Activated T-helper 1 cell treated with anti-CD3 and anti-CD28 coated beads, Interleukin-12 subunit alpha, Interleukin-12 subunit beta, Interleukin-2, Interleukin-4 antibody, amounts not matched to agents 30 ng/mL and 10 ng/mL and 1 ng/mL, durations not matched to agents 14 hours and 24 hours and 36 hours (primary cell): ENCODE measurements at regions of chr20 and their contacts with region 1.

Region 1: DNA sequence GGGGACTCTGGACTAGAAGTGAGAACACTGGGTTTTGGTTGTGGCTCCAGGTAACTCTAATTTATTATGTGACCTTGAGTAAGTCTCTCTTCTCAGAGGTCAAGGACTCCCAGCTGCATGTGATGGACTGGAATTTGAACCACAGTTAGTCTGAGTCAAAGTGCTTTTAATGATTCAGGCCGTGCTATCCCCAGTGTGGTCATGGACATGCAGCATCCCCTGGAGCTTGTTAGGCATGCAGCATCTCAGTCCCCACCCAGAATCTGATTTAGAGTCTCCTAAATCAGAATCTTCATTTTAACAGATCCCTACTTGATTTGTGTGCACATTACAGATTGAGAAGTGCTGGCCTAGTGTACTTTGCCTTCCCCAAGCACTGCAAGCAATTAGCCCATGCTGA is 74.2 kb downstream of the TOX2 start:
- DNase-seq: no peak
- H3K4me3 Mint-ChIP-seq: no peak overlapping the region
- H3K27ac Mint-ChIP-seq: no peak overlapping the region
- H3K4me1 Mint-ChIP-seq: peaks cover 26% of the 10 kb centered on the region
- H3K27me3 Mint-ChIP-seq: peaks cover 3% of the 10 kb centered on the region

Region 2: DNA sequence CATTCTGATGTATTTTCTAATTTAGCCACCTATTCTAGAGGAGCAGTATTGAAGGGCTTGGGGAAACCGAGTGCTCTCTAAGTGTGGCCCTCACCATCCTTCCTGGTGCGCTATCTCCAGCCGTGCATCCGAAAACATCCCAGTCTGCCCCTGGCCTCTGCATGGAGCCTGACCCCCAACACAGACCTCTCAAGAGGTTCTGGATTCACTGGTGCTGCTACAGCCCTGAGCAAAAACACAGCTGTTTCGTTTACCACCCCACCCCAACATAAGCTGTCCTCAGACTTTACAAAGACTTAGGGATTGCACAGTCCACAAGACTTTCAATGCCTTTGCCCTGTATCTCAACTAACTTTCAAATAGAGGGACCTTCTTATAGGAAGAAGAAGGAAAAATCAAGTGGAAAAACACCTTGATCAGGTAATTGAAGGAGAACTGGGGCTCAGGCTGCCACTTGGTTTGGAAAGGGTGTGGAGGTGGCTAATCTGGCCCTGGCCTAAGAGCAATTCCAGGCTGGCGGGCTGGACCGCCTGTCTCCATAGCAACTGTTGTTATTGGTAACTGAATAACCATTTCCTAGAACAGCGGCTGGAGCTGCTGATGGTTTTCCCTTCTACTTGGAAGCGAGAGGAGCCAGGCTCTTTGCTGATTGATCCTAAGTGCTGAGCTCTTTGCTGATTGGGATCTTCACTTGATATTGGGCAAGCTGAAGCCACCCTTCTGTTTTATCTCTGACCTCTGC is 164.4 kb before region 1 on chr20:
- intact Hi-C with region 1: no loop called
- DNase-seq: no peak
- H3K4me3 Mint-ChIP-seq: no peak overlapping the region
- H3K27ac Mint-ChIP-seq: no peak overlapping the region
- H3K4me1 Mint-ChIP-seq: peaks cover 13% of the 10 kb centered on the region
- H3K27me3 Mint-ChIP-seq: peaks cover 2% of the 10 kb centered on the region

Region 3: DNA sequence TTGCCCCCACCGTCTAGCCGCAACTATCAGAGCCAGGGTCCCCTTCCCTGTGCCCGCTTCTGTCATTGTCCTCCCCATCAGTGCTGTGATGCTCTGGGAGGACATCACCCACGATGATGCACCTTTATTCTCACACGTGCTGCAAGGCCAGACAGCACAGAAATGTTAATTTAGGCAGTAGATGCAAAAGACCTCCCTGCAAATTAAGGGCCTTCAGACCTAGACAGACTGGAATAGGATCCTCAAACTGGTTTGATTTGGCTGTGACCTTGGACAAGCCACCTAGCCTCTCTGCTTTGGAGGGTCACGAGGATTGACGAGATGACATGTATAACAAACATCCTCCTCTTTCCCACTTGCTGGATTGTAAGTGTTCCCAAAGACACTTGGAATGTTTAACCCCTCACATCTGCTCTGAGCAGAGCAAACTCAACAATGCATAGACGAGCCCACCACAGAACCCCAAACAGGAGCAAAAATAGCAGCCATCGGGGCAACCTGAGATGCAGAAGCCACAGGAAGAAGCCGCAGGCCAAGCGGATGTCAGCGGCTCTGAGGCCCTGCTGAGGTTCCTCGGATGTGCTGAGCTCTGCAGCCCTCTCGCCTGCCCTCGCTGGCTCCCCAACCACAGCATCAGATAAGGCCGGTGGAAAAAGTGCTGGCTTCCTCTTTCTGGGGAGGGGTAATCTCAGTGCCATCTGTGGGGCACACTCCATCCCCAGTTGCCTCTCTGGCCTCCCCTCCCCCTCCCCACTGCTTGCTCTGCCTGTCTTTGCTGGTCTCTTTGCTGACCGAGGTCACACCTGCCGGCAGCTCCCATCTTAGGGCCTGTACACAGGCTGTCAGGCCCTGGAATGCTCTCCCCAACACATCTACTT is 38.9 kb before region 1 on chr20:
- intact Hi-C with region 1: loop called (anchors 1 kb)
- DNase-seq: peak; percentile 77
- H3K4me3 Mint-ChIP-seq: peak overlapping the region; percentile 43
- H3K27ac Mint-ChIP-seq: peak overlapping the region; percentile 30
- H3K4me1 Mint-ChIP-seq: peaks cover 71% of the 10 kb centered on the region
- H3K27me3 Mint-ChIP-seq: peaks cover 12% of the 10 kb centered on the region

Region 4: DNA sequence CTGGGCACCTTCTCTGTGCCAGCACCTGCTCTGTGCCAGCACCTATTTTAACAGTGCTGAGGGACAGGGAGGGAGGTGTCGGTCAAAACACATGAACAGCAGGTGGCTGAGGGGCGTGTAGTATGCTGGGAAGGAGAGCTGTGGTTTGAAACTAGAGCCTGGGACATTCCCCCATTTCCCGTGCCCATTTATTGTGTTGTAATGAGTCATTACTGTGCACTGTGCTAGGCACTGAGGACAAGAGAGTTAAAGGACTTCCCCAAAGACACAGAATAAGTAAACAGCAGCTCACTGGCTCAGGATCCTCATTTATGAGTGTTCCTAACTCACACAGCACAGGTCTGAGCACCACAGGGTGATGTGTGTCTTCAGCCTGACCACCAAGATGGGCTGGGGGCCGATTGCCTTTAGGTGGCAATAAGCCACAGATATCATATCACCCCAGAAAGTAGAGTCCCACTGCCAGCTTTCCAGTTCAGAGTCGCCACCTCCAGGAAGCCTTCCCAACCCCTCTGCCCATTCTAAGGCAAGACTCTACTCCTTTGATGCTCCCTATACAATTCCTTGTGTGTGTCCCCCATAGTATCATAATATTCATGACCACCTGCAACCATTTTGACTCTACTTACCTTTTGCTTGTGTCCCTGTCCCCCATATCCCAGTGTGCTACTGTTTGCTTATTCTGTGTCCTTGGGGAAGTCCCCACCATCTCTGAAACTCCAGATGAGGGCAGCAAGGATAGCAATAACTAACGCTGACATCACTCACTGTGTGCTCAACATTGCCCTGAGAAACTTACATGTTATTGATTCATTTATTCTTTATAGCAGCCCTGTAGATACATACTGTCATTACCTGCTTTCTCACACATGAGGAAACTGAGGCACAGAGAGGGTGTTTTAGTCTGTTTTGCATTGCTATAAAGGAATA is 13.1 kb after region 1 on chr20:
- intact Hi-C with region 1: loop called (anchors 1 kb)
- DNase-seq: no peak
- H3K4me3 Mint-ChIP-seq: peak overlapping the region; percentile 24
- H3K27ac Mint-ChIP-seq: peak overlapping the region; percentile 21
- H3K4me1 Mint-ChIP-seq: peaks cover 22% of the 10 kb centered on the region
- H3K27me3 Mint-ChIP-seq: peaks cover 2% of the 10 kb centered on the region